GM12878 (cell line): ENCODE measurements at regions of chr18 and their contacts with region 1.

Region 1: GRCh38 chr18:49052891-49053644 is 102.3 kb upstream of the SMAD7 start:
- DNase-seq: no peak
- ATAC-seq: no peak
- H3K4me3 ChIP-seq: no peak overlapping the region
- H3K27ac ChIP-seq: no peak overlapping the region
- H3K4me1 ChIP-seq: peaks cover 10% of the 10 kb centered on the region
- H3K27me3 ChIP-seq: no peaks in the 10 kb centered on the region
- CTCF ChIP-seq: no peak
- EP300 ChIP-seq: no peak
- POLR2A ChIP-seq: no peak
- RAD21 ChIP-seq: no peak

Region 2: DNA sequence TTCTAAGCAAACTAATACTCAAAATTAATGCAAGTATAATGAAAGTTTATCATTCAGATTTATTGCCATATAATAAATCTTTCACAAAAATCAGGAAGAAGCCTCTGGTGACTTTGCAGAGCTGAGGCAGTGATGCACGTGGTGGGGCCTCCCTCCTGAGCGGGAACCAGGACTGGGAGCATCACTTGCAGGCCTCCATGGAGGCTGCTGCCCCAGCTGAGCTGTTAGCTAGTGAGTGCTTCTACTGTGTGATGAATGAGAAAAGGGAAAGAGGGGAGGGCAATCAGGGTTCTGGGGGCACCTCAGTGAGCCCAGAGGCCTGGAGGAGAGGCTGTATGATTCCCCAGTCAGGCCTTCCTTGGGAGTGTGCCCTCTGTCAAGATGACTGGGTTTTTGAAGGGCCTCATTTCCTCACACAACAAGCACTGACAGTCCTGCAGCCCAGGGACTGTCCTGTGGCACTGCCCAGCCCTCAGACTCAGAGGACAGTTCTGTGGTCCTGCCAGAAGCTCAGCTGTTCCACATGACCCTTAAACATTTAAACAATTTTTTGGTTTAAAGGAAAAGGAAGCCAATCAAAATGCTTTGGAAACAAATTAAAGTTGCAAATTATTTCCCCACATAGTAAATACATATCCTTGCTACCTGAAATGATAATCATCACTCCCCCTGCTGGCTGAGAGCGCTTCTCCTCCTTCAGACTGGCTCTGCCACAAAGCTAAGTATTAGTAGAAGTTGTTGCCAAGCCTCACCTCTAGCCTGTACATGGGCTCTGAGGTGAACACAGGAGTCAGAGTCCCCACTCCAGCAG is 11.4 kb before region 1 on chr18:
- CTCF ChIA-PET with region 1: interaction called, 19 read pairs
- POLR2A ChIA-PET with region 1: interaction called, 3 read pairs
- RAD21 ChIA-PET with region 1: interaction called, 6 read pairs
- SMC1A ChIA-PET with region 1: interaction called, 6 read pairs
- in situ Hi-C with region 1: no loop called
- intact Hi-C with region 1: no loop called
- DNase-seq: no peak
- ATAC-seq: peak; percentile 75
- H3K4me3 ChIP-seq: no peak overlapping the region
- H3K27ac ChIP-seq: no peak overlapping the region
- H3K4me1 ChIP-seq: no peaks in the 10 kb centered on the region
- H3K27me3 ChIP-seq: no peaks in the 10 kb centered on the region
- CTCF ChIP-seq: peak; percentile 49 to 56 (median 53); a peak in 5 of 6 replicates
- EP300 ChIP-seq: no peak
- POLR2A ChIP-seq: no peak
- RAD21 ChIP-seq: peak; percentile 51

Region 3: DNA sequence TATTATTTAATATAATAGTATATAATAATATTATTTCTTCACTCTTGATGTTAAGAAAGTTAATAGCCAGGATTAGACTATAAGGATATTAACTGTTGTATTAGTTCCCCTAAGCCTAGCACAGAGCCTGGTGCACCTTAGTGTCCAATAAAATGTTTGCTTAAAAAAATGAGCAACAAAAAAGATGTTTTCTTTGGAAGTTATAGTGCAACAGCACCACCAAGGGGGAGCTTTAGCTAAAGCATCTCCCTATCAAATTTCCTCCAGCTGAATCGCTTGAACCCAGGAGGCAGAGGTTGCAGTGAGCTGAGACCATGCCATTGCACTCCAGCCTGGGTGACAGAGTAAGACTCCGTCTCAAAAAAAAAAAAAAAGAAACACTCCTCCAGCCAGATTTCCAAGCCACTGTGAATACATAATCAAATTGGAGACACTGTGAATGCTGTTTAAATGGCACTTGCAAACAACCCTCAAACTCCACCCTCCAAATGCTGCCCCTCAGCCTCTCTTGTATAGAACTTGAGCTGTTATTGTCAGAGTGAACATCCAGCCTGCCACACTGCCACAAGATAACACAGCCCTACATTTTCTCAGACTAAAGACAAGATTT is 185.5 kb after region 1 on chr18:
- CTCF ChIA-PET with region 1: no interaction called
- POLR2A ChIA-PET with region 1: no interaction called
- RAD21 ChIA-PET with region 1: no interaction called
- SMC1A ChIA-PET with region 1: no interaction called
- in situ Hi-C with region 1: no loop called
- intact Hi-C with region 1: no loop called
- DNase-seq: no peak
- ATAC-seq: no peak
- H3K4me3 ChIP-seq: no peak overlapping the region
- H3K27ac ChIP-seq: no peak overlapping the region
- H3K4me1 ChIP-seq: no peaks in the 10 kb centered on the region
- H3K27me3 ChIP-seq: no peaks in the 10 kb centered on the region
- CTCF ChIP-seq: peak; percentile 18 to 50 (median 45); a peak in 4 of 6 replicates
- EP300 ChIP-seq: no peak
- POLR2A ChIP-seq: no peak
- RAD21 ChIP-seq: peak; percentile 59